ENCODE measurements at regions of chr10 and their contacts with region 1.

Region 1: GRCh38 chr10:6108603-6109443 is 20.0 kb downstream of the RBM17 start:
- DNase-seq: peak; percentile 33 to 72 (median 68)
- H3K4me3 ChIP-seq: no peak overlapping the region
- H3K4me3 Mint-ChIP-seq: no peak overlapping the region
- H3K27ac ChIP-seq: no peak overlapping the region
- H3K27ac Mint-ChIP-seq: peak overlapping the region in 3 of 7 donors; percentile 3 to 64 (median 51)
- H3K4me1 ChIP-seq: peaks cover 0 to 4% of the 10 kb centered on the region in 2 donors
- H3K4me1 Mint-ChIP-seq: peaks cover 5% of the 10 kb centered on the region
- H3K27me3 ChIP-seq: no peaks in the 10 kb centered on the region
- H3K27me3 Mint-ChIP-seq: no peaks in the 10 kb centered on the region
- CTCF ChIP-seq: peak; percentile 89

Region 2: GRCh38 chr10:6062101-6062771 is 46.6 kb before region 1 on chr10 and contains the start of gene IL2RA:
- intact Hi-C with region 1: no loop called
- DNase-seq: peak in 1 of 3 donors; percentile 36
- H3K4me3 ChIP-seq: no peak within 1 kb of the TSS
- H3K4me3 Mint-ChIP-seq: no peak within 1 kb of the TSS
- H3K27ac ChIP-seq: no peak within 1 kb of the TSS
- H3K27ac Mint-ChIP-seq: peak within 1 kb of the TSS in 1 of 7 donors; percentile 21
- H3K4me1 ChIP-seq: peaks cover 31 to 35% of the 10 kb centered on the region in 2 donors
- H3K4me1 Mint-ChIP-seq: peaks cover 34% of the 10 kb centered on the region
- H3K27me3 ChIP-seq: no peaks in the 10 kb centered on the region
- H3K27me3 Mint-ChIP-seq: peaks cover 0 to 3% (median 2%) of the 10 kb centered on the region in 3 donors
- CTCF ChIP-seq: no peak
- polyA plus RNA-seq, gene IL2RA: 0.06 TPM in 1 of 3 donors, not detected in the others

Region 3: GRCh38 chr10:6151087-6151977 is 42.5 kb after region 1 on chr10:
- intact Hi-C with region 1: loop called in 1 of 2 experiments (anchors 5 kb)
- DNase-seq: peak; percentile 86 to 97 (median 91)
- H3K4me3 ChIP-seq: peak overlapping the region in 2 of 3 experiments; percentile 18 to 70
- H3K4me3 Mint-ChIP-seq: peak overlapping the region; percentile 74 to 90
- H3K27ac ChIP-seq: peak overlapping the region; percentile 91 to 94
- H3K27ac Mint-ChIP-seq: peak overlapping the region; percentile 94 to 98 (median 96)
- H3K4me1 ChIP-seq: peaks cover 64 to 75% of the 10 kb centered on the region in 2 donors
- H3K4me1 Mint-ChIP-seq: peaks cover 75% of the 10 kb centered on the region
- H3K27me3 ChIP-seq: no peaks in the 10 kb centered on the region
- H3K27me3 Mint-ChIP-seq: peaks cover 0 to 7% (median 0%) of the 10 kb centered on the region in 3 donors
- CTCF ChIP-seq: peak; percentile 71